ENCODE measurements at regions of chr3 and their contacts with region 1.

Region 1: GRCh38 chr3:182837855-182838454 is 44.7 kb downstream of the ATP11B start:
- DNase-seq: peak in 6 of 9 donors; percentile 5 to 52 (median 34)
- ATAC-seq: peak; percentile 53
- H3K4me3 ChIP-seq: no peak overlapping the region
- H3K4me3 Mint-ChIP-seq: no peak overlapping the region
- H3K27ac ChIP-seq: no peak overlapping the region
- H3K27ac Mint-ChIP-seq: no peak overlapping the region
- H3K4me1 ChIP-seq: no peaks in the 10 kb centered on the region
- H3K4me1 Mint-ChIP-seq: peaks cover 3 to 20% (median 4%) of the 10 kb centered on the region in 7 donors
- H3K27me3 ChIP-seq: no peaks in the 10 kb centered on the region
- H3K27me3 Mint-ChIP-seq: no peaks in the 10 kb centered on the region

Region 2: GRCh38 chr3:182816181-182816580 is 21.8 kb before region 1 on chr3:
- CTCF ChIA-PET with region 1: interaction called, 3 read pairs
- POLR2A ChIA-PET with region 1: no interaction called
- intact Hi-C with region 1: loop called in 1 of 2 experiments (anchors 2 kb)
- DNase-seq: no peak
- ATAC-seq: no peak
- H3K4me3 ChIP-seq: no peak overlapping the region
- H3K4me3 Mint-ChIP-seq: peak overlapping the region in 5 of 10 donors; percentile 10 to 55 (median 29)
- H3K27ac ChIP-seq: no peak overlapping the region
- H3K27ac Mint-ChIP-seq: peak overlapping the region in 5 of 9 donors; percentile 30 to 67 (median 34)
- H3K4me1 ChIP-seq: peaks cover 6 to 13% of the 10 kb centered on the region in 2 donors
- H3K4me1 Mint-ChIP-seq: peaks cover 36 to 86% (median 68%) of the 10 kb centered on the region in 7 donors
- H3K27me3 ChIP-seq: no peaks in the 10 kb centered on the region
- H3K27me3 Mint-ChIP-seq: no peaks in the 10 kb centered on the region

Region 3: GRCh38 chr3:182855076-182855475 is 17.1 kb after region 1 on chr3:
- CTCF ChIA-PET with region 1: no interaction called
- POLR2A ChIA-PET with region 1: no interaction called
- intact Hi-C with region 1: loop called in 1 of 2 experiments (anchors 2 kb)
- DNase-seq: no peak
- ATAC-seq: no peak
- H3K4me3 ChIP-seq: no peak overlapping the region
- H3K4me3 Mint-ChIP-seq: no peak overlapping the region
- H3K27ac ChIP-seq: no peak overlapping the region
- H3K27ac Mint-ChIP-seq: peak overlapping the region in 6 of 9 donors; percentile 18 to 62 (median 39)
- H3K4me1 ChIP-seq: no peaks in the 10 kb centered on the region
- H3K4me1 Mint-ChIP-seq: peaks cover 0 to 10% (median 5%) of the 10 kb centered on the region in 7 donors
- H3K27me3 ChIP-seq: no peaks in the 10 kb centered on the region
- H3K27me3 Mint-ChIP-seq: no peaks in the 10 kb centered on the region

Measured in naive thymus-derived CD4-positive, alpha-beta T cell (primary cell).